Prostate gland (tissue), 2 donors: ENCODE measurements at regions of chr22 and their contacts with region 1.

Region 1: DNA sequence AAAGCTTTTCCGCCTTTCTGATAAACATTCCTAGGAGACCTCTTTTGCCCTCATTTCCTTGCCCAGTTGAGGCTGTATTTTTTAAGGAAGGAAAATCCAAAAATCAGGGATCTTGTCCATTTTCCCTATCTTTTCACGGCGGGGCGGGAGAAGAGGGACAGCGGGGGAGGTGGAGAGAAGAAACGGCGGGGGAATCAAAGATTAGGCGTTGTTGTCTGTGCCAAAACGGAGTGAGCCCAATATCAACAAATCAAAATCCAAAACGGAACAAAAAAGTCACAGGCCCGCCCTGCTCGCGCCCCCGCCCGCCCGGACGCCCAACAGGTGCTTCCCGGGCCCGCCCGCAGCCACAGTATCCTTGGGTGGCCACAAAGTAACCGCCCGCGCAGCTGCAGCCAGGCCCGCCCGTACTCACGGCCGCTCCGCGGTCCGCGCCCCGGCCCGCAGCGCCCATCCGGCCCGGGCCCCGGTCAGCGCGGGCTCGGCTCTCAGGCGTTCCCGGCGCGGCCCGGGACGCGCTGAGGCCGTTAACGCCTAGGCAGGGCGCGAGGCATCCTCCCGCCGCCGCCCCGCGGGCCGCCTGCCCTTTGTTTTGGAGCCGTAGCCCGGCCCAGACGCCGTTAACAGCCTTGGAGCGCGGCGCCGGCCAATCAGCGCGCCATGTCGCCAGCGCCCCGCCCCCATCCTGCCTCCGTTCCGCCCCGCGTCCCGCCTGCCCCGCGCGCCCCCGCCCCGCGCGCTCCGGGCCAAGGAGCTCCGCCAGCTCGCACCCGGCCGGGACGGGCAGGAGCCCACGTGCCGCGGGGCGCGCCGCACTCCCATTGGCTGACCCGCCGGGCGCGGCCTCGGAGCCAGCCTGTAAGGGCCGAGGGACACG is at the start of gene YPEL1:
- DNase-seq: peak; percentile 96
- H3K4me3 ChIP-seq: peak within 1 kb of the TSS; percentile 39 to 65
- H3K27ac ChIP-seq: peak within 1 kb of the TSS; percentile 43 to 69
- H3K4me1 ChIP-seq: peaks cover 3% of the 10 kb centered on the region
- H3K27me3 ChIP-seq: no peaks in the 10 kb centered on the region
- CTCF ChIP-seq: peak in 1 of 4 experiments; percentile 17
- POLR2A ChIP-seq: peak; percentile 98
- total RNA-seq, gene YPEL1: 2.9 to 16.2 TPM

Region 2: GRCh38 chr22:21657361-21658032 is 77.9 kb before region 1 on chr22:
- intact Hi-C with region 1: no loop called
- DNase-seq: peak; percentile 49
- H3K4me3 ChIP-seq: peak overlapping the region; percentile 24 to 41
- H3K27ac ChIP-seq: no peak overlapping the region
- H3K4me1 ChIP-seq: no peaks in the 10 kb centered on the region
- H3K27me3 ChIP-seq: no peaks in the 10 kb centered on the region
- CTCF ChIP-seq: peak in 1 of 4 experiments; percentile 26
- POLR2A ChIP-seq: peak; percentile 16

Region 3: GRCh38 chr22:21837248-21837979 is 102.0 kb after region 1 on chr22:
- intact Hi-C with region 1: loop called (anchors 10 kb)
- DNase-seq: no peak
- H3K4me3 ChIP-seq: no peak overlapping the region
- H3K27ac ChIP-seq: peak overlapping the region; percentile 3 to 35
- H3K4me1 ChIP-seq: peaks cover 6% of the 10 kb centered on the region
- H3K27me3 ChIP-seq: no peaks in the 10 kb centered on the region
- CTCF ChIP-seq: no peak
- POLR2A ChIP-seq: no peak